CD14-positive monocyte (primary cell): ENCODE measurements at regions of chr20 and their contacts with region 1.

Region 1: DNA sequence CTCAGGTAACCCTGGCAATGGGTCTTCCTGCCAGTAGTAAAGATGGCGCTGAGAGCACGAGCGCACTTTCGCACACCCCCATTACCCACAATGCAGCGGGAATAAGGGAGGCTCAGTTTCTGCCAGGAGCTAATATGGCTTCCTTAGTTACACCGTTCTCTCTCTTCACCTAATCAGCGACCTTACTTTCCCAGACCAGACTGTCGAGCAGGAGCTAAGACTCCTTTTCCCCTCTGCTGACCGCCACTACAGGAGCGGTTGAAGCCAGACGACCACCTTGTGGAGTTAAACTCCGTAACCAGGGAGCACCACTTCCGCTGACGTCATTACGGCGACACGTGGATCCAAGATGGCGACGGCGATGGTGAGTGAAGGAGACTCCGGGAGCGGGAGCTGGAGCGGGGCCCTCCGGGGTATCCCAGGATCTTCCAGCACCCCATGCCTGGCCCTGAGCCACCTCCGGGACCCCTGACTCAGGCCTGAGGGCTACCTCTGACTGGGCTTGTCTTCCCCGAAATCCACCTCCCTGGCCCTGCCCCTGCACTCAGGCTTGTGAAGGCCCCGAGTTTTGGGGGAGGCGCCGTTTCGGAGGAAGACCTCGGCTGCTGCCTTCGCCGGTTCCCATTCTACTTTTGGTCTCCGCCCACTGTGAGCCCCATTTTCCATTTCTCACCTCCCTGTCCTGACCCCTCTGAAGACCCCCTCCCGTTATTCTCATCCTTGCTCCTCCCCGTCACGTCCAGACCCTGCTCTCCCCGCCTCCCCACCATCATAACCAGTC is at the start of gene TM9SF4:
- DNase-seq: peak; percentile 86 to 91 (median 88)
- H3K4me3 ChIP-seq: peak within 1 kb of the TSS; percentile 81 to 98 (median 81)
- H3K4me3 Mint-ChIP-seq: peak within 1 kb of the TSS; percentile 99 to 100
- H3K27ac ChIP-seq: peak within 1 kb of the TSS; percentile 91 to 99
- H3K27ac Mint-ChIP-seq: peak within 1 kb of the TSS; percentile 99 to 100 (median 100)
- H3K4me1 ChIP-seq: peaks cover 45 to 47% of the 10 kb centered on the region in 2 donors
- H3K4me1 Mint-ChIP-seq: peaks cover 45% of the 10 kb centered on the region
- H3K27me3 ChIP-seq: no peaks in the 10 kb centered on the region
- H3K27me3 Mint-ChIP-seq: peaks cover 0 to 2% (median 0%) of the 10 kb centered on the region in 3 donors
- CTCF ChIP-seq: no peak
- polyA plus RNA-seq, gene TM9SF4: 49.7 to 78.5 (median 78.3) TPM

Region 2: DNA sequence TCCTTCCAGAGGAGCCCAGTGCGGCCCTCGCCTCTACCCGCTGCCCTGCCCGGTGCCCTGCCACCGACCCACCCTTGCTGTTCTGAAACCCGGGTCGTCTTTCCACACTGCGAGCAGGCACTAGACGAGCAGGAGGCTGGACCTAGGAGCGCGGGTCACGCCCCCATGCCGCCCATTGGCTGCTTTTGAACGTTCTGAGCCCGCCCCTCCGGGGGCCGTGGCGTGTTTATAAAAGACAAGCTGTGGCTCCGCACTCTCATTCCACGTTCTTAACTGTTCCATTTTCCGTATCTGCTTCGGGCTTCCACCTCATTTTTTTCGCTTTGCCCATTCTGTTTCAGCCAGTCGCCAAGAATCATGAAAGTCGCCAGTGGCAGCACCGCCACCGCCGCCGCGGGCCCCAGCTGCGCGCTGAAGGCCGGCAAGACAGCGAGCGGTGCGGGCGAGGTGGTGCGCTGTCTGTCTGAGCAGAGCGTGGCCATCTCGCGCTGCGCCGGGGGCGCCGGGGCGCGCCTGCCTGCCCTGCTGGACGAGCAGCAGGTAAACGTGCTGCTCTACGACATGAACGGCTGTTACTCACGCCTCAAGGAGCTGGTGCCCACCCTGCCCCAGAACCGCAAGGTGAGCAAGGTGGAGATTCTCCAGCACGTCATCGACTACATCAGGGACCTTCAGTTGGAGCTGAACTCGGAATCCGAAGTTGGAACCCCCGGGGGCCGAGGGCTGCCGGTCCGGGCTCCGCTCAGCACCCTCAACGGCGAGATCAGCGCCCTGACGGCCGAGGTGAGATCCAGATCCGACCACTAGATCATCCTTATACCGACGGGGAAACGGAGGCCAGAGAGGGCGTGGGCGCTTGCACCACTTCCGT is 504.3 kb before region 1 on chr20 and contains the start of gene ID1:
- intact Hi-C with region 1: loop called in 1 of 2 experiments (anchors 10 kb)
- DNase-seq: peak; percentile 87 to 94 (median 91)
- H3K4me3 ChIP-seq: peak within 1 kb of the TSS; percentile 57 to 83 (median 60)
- H3K4me3 Mint-ChIP-seq: peak within 1 kb of the TSS; percentile 95 to 97
- H3K27ac ChIP-seq: peak within 1 kb of the TSS in 1 of 2 donors; percentile 45
- H3K27ac Mint-ChIP-seq: peak within 1 kb of the TSS; percentile 83 to 95 (median 90)
- H3K4me1 ChIP-seq: peaks cover 49 to 66% of the 10 kb centered on the region in 2 donors
- H3K4me1 Mint-ChIP-seq: peaks cover 48% of the 10 kb centered on the region
- H3K27me3 ChIP-seq: peaks cover 8 to 34% of the 10 kb centered on the region in 2 donors
- H3K27me3 Mint-ChIP-seq: peaks cover 26 to 50% (median 32%) of the 10 kb centered on the region in 3 donors
- CTCF ChIP-seq: no peak
- polyA plus RNA-seq, gene ID1: 3.9 to 129 (median 12.5) TPM

Region 3: DNA sequence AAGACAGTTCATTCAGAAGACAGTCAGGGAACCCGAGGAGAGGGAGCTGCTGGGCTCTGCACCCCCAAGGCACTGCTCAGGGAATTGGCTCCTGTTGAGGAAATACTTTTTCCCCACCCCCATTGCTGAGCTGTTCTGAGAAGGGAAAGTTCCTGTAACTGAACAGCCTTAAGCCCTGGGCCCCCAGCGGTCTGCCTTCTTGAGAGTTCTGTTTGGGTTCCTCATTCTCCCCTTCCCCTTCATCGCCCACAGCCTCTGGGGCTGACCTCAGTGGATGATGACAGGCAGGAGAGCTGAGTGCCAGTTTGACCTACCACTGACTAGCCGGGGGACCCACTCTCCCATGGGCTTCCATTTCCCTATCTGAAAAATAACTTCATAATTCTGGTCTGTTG is 46.8 kb before region 1 on chr20:
- intact Hi-C with region 1: loop called in 1 of 2 experiments (anchors 5 kb)
- DNase-seq: peak; percentile 95 to 97 (median 97)
- H3K4me3 ChIP-seq: peak overlapping the region; percentile 33 to 72 (median 34)
- H3K4me3 Mint-ChIP-seq: peak overlapping the region; percentile 76 to 94
- H3K27ac ChIP-seq: peak overlapping the region; percentile 91 to 94
- H3K27ac Mint-ChIP-seq: peak overlapping the region; percentile 97 to 100 (median 99)
- H3K4me1 ChIP-seq: peaks cover 98 to 100% of the 10 kb centered on the region in 2 donors
- H3K4me1 Mint-ChIP-seq: peaks cover 96% of the 10 kb centered on the region
- H3K27me3 ChIP-seq: no peaks in the 10 kb centered on the region
- H3K27me3 Mint-ChIP-seq: no peaks in the 10 kb centered on the region
- CTCF ChIP-seq: no peak

Region 4: GRCh38 chr20:32155017-32155981 is 45.7 kb after region 1 on chr20:
- intact Hi-C with region 1: loop called (anchors 2 to 5 kb)
- DNase-seq: peak; percentile 98 to 100 (median 99)
- H3K4me3 ChIP-seq: peak overlapping the region in 1 of 3 experiments; percentile 41
- H3K4me3 Mint-ChIP-seq: peak overlapping the region; percentile 70 to 87
- H3K27ac ChIP-seq: peak overlapping the region; percentile 79 to 85
- H3K27ac Mint-ChIP-seq: peak overlapping the region; percentile 94 to 99 (median 98)
- H3K4me1 ChIP-seq: peaks cover 21 to 49% of the 10 kb centered on the region in 2 donors
- H3K4me1 Mint-ChIP-seq: peaks cover 52% of the 10 kb centered on the region
- H3K27me3 ChIP-seq: no peaks in the 10 kb centered on the region
- H3K27me3 Mint-ChIP-seq: peaks cover 0 to 2% (median 0%) of the 10 kb centered on the region in 3 donors
- CTCF ChIP-seq: peak; percentile 20

Region 5: DNA sequence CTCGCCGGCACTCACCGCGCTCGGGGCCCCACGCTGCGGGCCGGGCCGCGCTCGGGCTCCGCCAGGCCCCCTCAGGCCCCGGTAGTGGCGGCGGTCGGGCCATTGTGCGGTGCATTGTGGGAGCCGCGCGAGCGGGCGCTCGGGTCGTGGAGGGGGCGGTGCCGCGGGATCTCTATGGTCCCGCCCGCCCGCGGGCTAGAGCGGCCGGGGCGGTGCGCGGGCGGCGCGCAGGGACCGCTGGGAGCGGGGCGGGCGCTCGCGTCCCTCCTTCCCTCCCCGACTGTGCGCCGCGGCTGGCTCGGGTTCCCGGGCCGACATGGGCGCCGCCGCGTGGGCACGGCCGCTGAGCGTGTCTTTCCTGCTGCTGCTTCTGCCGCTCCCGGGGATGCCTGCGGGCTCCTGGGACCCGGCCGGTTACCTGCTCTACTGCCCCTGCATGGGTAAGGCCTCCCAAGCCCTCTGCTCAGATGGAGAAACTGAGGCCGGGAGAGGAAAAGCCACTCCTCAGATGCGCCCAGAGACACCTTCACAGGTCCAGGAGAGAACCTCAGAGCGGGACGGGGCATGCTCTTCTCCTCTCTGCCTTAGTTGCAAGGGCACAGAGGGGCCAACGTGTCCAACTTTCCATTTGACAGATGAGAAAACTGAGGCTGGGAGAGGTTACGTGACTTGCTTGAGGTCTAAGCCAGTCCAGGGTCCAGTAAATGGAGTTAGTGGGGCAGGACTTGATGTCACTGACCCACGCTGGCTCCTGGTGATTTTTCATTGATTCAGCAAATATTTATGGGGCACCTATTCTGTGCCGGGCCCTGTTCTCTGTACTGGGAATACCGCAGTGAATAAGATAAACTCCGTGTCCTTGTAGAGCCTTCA is 98.3 kb after region 1 on chr20 and contains the starts of genes PLAGL2 and POFUT1:
- intact Hi-C with region 1: loop called (anchors 5 kb)
- DNase-seq: peak; percentile 76 to 85 (median 79)
- H3K4me3 ChIP-seq: peak within 1 kb of the TSS; percentile 90 to 96 (median 93)
- H3K4me3 Mint-ChIP-seq: peak within 1 kb of the TSS; percentile 97 to 98
- H3K27ac ChIP-seq: peak within 1 kb of the TSS; percentile 79 to 88
- H3K27ac Mint-ChIP-seq: peak within 1 kb of the TSS; percentile 96 to 99 (median 97)
- H3K4me1 ChIP-seq: peaks cover 49 to 59% of the 10 kb centered on the region in 2 donors
- H3K4me1 Mint-ChIP-seq: peaks cover 67% of the 10 kb centered on the region
- H3K27me3 ChIP-seq: no peaks in the 10 kb centered on the region
- H3K27me3 Mint-ChIP-seq: peaks cover 0 to 4% (median 1%) of the 10 kb centered on the region in 3 donors
- CTCF ChIP-seq: peak; percentile 22
- polyA plus RNA-seq, gene PLAGL2: 6.2 to 31.7 (median 14.7) TPM
- polyA plus RNA-seq, gene POFUT1: 10.9 to 22.8 (median 11.8) TPM

Region 6: DNA sequence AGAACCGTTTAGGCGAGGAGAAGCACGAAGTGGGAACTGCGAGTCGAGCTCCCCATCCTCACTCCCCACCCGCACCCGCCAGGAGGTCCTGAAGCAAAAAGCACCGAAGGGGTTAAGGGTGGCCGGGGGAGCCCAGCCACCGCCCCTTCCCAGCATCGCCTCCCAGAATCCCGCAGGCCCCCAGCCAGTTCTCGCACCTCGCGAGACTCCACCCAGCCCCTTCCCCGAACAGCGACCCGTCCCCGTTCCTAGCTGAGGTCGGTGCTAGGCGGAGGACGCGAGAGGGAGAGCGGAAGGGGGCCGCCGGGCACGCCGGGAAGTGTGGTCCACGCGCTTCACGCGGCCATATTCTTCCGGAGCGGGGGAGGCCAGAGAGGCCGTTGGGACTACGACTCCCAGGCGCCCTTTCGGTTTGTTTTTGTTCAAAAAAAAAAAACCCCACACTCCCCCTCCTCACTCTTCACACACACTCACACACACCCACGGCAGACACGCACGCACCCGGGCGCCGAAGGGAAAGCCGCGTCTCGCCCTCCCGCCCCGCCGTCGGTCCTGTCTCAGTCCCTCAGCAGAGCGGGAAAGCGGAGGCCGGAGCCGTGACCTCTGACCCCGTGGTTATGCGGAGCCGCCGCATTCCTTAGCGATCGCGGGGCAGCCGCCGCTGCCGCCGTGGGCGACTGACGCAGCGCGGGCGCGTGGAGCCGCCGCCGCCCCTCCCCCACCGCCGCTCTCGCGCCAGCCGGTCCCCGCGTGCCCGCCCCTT is 248.5 kb after region 1 on chr20 and contains the start of gene ASXL1:
- intact Hi-C with region 1: loop called in 1 of 2 experiments (anchors 5 kb)
- DNase-seq: peak; percentile 90 to 92 (median 91)
- H3K4me3 ChIP-seq: peak within 1 kb of the TSS; percentile 69 to 86 (median 74)
- H3K4me3 Mint-ChIP-seq: peak within 1 kb of the TSS; percentile 96 to 99
- H3K27ac ChIP-seq: peak within 1 kb of the TSS; percentile 91 to 94
- H3K27ac Mint-ChIP-seq: peak within 1 kb of the TSS; percentile 95 to 100 (median 99)
- H3K4me1 ChIP-seq: peaks cover 31 to 41% of the 10 kb centered on the region in 2 donors
- H3K4me1 Mint-ChIP-seq: peaks cover 38% of the 10 kb centered on the region
- H3K27me3 ChIP-seq: no peaks in the 10 kb centered on the region
- H3K27me3 Mint-ChIP-seq: no peaks in the 10 kb centered on the region
- CTCF ChIP-seq: no peak
- polyA plus RNA-seq, gene ASXL1: 1.8 to 47.1 (median 2.8) TPM

Region 7: DNA sequence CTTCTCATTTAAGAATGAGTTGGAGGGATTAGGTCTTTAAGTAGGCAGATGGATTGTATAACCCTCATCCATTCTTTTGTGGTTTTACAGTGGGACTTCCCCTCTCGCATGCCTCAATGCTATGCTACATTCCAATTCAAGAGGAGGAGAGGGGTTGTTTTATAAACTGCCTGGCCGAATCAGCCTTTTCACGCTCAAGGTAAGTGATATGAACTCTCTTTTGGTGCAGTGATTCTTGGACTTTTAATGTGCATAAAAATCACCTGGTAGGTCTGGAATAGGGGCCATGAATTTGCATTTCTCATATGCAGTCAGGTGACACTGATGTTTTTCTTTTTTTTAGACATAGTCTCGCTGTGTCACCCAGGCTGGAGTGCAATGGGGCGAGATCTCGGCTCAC is 259.3 kb after region 1 on chr20:
- intact Hi-C with region 1: no loop called
- DNase-seq: no peak
- H3K4me3 ChIP-seq: no peak overlapping the region
- H3K4me3 Mint-ChIP-seq: no peak overlapping the region
- H3K27ac ChIP-seq: no peak overlapping the region
- H3K27ac Mint-ChIP-seq: no peak overlapping the region
- H3K4me1 ChIP-seq: no peaks in the 10 kb centered on the region
- H3K4me1 Mint-ChIP-seq: peaks cover 7% of the 10 kb centered on the region
- H3K27me3 ChIP-seq: no peaks in the 10 kb centered on the region
- H3K27me3 Mint-ChIP-seq: no peaks in the 10 kb centered on the region
- CTCF ChIP-seq: no peak